ENCODE measurements at regions of chr6 and their contacts with region 1.

Region 1: DNA sequence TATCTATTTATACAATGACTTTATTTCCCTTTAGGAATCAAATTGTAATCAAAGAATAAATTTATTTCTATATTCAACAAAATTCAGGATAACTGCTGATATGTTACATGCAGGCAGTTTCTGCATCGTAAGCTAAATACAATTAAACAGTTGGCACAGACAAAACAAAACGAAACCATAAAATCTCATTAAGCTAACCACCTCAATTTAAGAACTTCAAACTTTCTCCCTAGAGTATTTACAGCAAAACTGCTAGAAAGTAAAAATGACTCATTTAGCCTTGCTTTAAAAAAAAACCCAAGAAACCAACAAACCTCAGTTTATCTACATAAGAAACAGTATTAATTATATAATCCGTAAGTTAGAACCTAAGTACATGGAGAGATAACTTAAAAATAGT is 17.1 kb downstream of the SSR1 start:
- DNase-seq: no peak
- ATAC-seq: no peak
- H3K4me3 ChIP-seq: no peak overlapping the region
- H3K4me3 Mint-ChIP-seq: no peak overlapping the region
- H3K27ac ChIP-seq: no peak overlapping the region
- H3K27ac Mint-ChIP-seq: no peak overlapping the region
- H3K4me1 ChIP-seq: no peaks in the 10 kb centered on the region
- H3K4me1 Mint-ChIP-seq: peaks cover 9% of the 10 kb centered on the region
- H3K27me3 ChIP-seq: no peaks in the 10 kb centered on the region
- H3K27me3 Mint-ChIP-seq: no peaks in the 10 kb centered on the region
- CTCF ChIP-seq: no peak

Region 2: GRCh38 chr6:7604506-7604905 is 308.6 kb after region 1 on chr6:
- CTCF ChIA-PET with region 1: no interaction called
- POLR2A ChIA-PET with region 1: interaction called, 4 read pairs
- intact Hi-C with region 1: loop called in 1 of 2 experiments (anchors 5 kb)
- DNase-seq: no peak
- ATAC-seq: no peak
- H3K4me3 ChIP-seq: no peak overlapping the region
- H3K4me3 Mint-ChIP-seq: no peak overlapping the region
- H3K27ac ChIP-seq: no peak overlapping the region
- H3K27ac Mint-ChIP-seq: no peak overlapping the region
- H3K4me1 ChIP-seq: no peaks in the 10 kb centered on the region
- H3K4me1 Mint-ChIP-seq: no peaks in the 10 kb centered on the region
- H3K27me3 ChIP-seq: no peaks in the 10 kb centered on the region
- H3K27me3 Mint-ChIP-seq: no peaks in the 10 kb centered on the region
- CTCF ChIP-seq: no peak